Transverse colon (tissue), 4 donors: ENCODE measurements at regions of chr18 and their contacts with region 1.

Region 1: GRCh38 chr18:63518178-63519012 is 23.8 kb upstream of the SERPINB12 start:
- DNase-seq: peak; percentile 50
- H3K4me3 ChIP-seq: no peak overlapping the region
- H3K27ac ChIP-seq: no peak overlapping the region
- H3K4me1 ChIP-seq: peaks cover 0 to 4% (median 2%) of the 10 kb centered on the region in 4 donors
- H3K27me3 ChIP-seq: no peaks in the 10 kb centered on the region
- CTCF ChIP-seq: peak; percentile 73 to 79 (median 77)
- EP300 ChIP-seq: no peak
- POLR2A ChIP-seq: no peak

Region 2: GRCh38 chr18:62741118-62741566 is 777.3 kb before region 1 on chr18:
- in situ Hi-C with region 1: no loop called
- intact Hi-C with region 1: no loop called
- DNase-seq: peak; percentile 42
- H3K4me3 ChIP-seq: peak overlapping the region in 1 of 4 donors; percentile 14
- H3K27ac ChIP-seq: peak overlapping the region; percentile 74 to 85 (median 78)
- H3K4me1 ChIP-seq: peaks cover 6 to 64% (median 49%) of the 10 kb centered on the region in 4 donors
- H3K27me3 ChIP-seq: no peaks in the 10 kb centered on the region
- CTCF ChIP-seq: no peak
- EP300 ChIP-seq: no peak
- POLR2A ChIP-seq: no peak

Region 3: GRCh38 chr18:63848159-63848558 is 329.8 kb after region 1 on chr18:
- in situ Hi-C with region 1: loop called (anchors 10 to 25 kb)
- intact Hi-C with region 1: loop called (anchors 5 kb)
- DNase-seq: no peak
- H3K4me3 ChIP-seq: no peak overlapping the region
- H3K27ac ChIP-seq: no peak overlapping the region
- H3K4me1 ChIP-seq: no peaks in the 10 kb centered on the region
- H3K27me3 ChIP-seq: no peaks in the 10 kb centered on the region
- CTCF ChIP-seq: peak in 4 of 5 experiments; percentile 32 to 41 (median 40)
- EP300 ChIP-seq: no peak
- POLR2A ChIP-seq: no peak

Region 4: DNA sequence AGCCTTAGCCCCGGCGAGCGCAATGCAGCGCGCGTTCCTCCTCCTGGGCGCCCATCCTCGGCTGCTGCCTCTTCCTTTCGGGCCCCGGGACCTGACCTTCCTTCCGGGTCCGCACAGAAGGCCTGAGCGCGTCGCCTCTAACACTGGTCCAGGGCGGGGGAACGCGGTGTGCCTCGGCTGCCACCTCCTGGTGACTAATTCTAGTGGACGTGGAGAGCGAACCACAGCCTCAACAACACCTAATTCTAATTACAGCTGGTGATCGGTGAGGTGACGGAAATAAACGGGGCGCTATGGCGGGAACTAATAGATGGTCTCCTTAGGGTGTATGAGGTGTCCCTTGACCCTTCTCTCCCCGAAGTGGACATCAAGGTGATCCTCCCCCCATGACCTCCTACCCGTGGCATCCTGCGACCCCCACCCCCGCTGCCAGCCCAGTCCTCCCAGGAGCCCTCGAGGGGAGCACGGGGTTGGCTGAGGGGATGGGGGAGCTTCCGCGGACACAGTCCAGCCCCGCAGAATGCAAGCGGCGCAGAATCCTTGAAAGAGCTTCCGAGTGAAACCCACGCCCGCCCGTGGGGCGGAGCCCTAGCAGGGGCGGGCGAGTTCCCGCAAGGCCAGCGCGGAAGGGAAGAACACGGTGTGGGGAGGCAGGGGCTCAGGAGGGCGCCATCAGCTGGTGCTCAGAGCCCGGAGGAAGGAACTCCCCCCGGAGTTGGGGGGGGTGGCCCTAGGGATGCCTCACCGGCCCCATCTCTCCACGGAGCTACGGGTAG is 417.9 kb after region 1 on chr18:
- in situ Hi-C with region 1: loop called in 1 of 4 experiments (anchors 25 kb)
- intact Hi-C with region 1: no loop called
- DNase-seq: peak; percentile 83
- H3K4me3 ChIP-seq: peak overlapping the region; percentile 19 to 56 (median 34)
- H3K27ac ChIP-seq: no peak overlapping the region
- H3K4me1 ChIP-seq: peaks cover 0 to 7% (median 5%) of the 10 kb centered on the region in 4 donors
- H3K27me3 ChIP-seq: peaks cover 19% of the 10 kb centered on the region
- CTCF ChIP-seq: peak; percentile 60 to 69 (median 64)
- EP300 ChIP-seq: no peak
- POLR2A ChIP-seq: no peak

Region 5: GRCh38 chr18:63979409-63979920 is 461.1 kb after region 1 on chr18:
- in situ Hi-C with region 1: loop called in 3 of 4 experiments (anchors 25 kb)
- intact Hi-C with region 1: no loop called
- DNase-seq: peak; percentile 47
- H3K4me3 ChIP-seq: peak overlapping the region in 3 of 4 donors; percentile 3 to 35 (median 14)
- H3K27ac ChIP-seq: peak overlapping the region; percentile 49 to 70 (median 60)
- H3K4me1 ChIP-seq: peaks cover 0 to 18% (median 5%) of the 10 kb centered on the region in 4 donors
- H3K27me3 ChIP-seq: no peaks in the 10 kb centered on the region
- CTCF ChIP-seq: peak; percentile 79 to 87 (median 81)
- EP300 ChIP-seq: no peak
- POLR2A ChIP-seq: no peak